Cardiac septum (tissue), 1 donor: ENCODE measurements at regions of chr16 and their contacts with region 1.

Region 1: DNA sequence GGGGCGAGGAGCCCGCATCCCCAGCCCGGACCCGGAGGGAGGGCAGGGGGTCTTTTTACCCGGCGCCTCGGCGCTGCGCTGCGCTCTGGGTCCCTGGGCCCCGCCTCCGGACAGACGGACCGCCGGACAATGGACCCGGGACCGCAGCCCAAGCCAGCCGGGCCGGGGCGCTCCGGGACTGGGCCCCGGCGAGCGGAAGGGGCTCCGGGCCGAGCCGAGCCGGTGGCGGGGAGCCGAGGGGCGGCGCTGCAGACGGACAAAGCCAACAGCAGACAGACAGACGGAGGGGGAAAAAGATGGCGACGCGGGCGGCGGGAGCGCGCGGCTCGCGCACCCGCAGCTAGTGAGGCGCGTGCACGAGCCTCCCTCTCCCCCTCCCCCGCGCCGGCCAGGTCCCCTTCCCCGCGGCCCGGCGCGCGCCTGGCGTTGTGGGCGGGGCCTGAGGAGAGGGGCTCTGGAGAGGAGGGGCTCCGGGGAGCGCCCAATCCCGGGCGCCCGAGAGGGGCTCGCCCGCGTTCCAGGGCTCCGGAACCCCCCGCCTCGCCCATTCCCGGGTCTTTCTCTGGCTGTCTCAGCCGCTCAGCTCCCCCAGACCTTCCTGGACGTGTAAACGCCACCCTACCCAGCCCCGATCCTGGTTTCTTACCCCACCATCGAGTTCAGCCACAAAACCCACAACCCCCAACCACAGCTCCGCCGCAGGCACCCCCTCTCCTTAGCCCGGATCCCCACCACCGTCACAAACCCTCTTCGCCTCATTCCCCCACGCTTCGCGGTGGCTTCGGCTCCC is at the start of gene ZNF821:
- DNase-seq: peak; percentile 88
- total RNA-seq, gene ZNF821: 7.2 TPM

Region 2: DNA sequence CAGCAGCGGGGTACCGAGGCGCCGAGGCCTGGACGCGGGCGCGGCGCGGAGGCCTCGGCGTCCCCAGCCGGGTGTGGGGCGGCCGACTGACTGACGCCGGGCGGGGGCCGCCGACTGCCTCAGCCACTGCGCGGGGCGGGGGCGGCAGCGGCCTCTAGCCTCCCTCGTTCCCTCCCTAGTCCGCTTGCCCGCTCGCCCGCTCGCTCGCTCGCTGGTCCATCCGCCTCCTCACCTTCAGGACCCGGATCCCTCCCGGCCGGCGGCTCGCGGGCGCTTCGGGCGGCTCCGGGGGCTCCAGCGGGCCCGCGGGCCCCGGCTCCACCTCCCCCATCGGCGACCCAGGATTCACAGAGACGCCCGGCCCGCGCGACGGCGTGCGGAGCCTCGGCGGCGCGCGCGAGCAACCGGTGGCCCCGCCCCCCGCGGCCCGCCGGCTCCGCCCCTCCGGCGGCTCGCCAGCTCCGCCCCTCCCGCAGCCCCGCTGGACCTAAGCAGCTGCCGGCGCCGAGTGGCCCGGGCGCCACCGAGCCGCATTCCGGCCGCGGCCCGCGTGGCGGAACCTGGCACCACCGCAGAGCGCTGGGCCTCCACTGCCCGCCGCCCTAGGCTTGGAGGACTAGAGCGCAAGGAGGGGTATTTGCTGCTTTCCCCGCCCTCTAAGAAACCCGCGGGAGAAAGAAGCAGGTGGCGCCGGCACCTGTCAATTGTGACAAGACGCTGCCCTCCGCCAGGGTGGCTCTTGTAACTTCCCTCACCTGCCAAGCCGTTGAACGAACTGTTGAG is 160.3 kb before region 1 on chr16:
- intact Hi-C with region 1: loop called (anchors 5 kb)
- DNase-seq: peak; percentile 90

Region 3: DNA sequence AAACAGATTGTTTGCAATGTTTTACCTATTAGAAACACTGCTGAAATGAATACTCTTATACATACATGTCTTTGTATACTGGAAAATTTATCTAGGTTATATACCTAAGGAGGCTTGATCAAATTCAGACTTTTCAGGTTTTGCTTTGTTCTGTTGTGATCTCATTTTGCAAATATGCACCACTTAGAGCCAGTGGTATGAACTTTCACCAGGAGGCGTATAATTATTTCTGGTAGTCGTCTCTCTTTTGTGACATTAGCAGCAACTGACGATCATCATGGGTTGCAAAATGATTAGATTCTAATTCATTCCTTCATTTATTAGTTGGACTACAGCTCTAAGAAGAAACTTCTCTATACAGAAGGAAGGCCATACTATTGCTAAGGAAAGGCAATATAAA is 102.3 kb before region 1 on chr16:
- intact Hi-C with region 1: no loop called
- DNase-seq: no peak

Region 4: GRCh38 chr16:71894921-71895678 is 11.1 kb after region 1 on chr16 and contains the start of gene IST1:
- intact Hi-C with region 1: loop called (anchors 1 kb)
- DNase-seq: peak; percentile 99
- total RNA-seq, gene IST1: 111 TPM

Region 5: GRCh38 chr16:71961066-71962039 is 77.3 kb after region 1 on chr16:
- intact Hi-C with region 1: loop called (anchors 5 kb)
- DNase-seq: peak; percentile 91

Region 6: DNA sequence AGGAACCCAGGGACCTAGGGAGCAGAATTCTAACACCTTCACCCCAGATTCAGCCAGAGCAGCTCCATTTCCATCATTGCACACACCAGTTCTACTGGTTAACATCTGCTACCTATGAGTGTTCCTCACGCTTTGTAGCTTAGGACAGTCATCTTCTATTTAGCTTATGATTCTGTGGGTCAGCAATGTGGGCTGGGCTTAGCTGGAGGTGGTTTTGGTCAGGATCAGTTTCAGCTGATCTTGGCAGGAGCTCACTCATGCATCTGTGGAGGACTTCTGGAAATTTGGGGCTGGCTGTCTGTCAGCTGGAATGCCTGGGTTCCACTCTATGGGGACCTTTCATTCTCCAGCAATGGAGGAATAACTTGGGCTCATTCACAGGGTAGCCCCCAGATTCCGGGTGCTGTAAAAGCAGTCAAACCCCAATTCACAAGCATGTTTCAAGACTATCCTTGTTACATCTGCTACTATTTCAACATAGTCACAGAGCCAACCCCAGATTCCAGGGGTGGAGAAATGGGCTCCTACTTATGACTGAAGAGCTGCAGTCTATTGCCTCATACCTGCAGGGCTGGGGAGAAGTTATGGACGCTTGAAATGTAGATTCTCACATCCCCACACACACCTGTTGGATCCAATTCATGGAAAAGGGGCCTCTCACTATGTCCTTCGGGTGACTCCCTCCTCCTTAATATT is 166.9 kb after region 1 on chr16:
- intact Hi-C with region 1: no loop called
- DNase-seq: no peak